ENCODE measurements at regions of chr15 and their contacts with region 1.

Region 1: DNA sequence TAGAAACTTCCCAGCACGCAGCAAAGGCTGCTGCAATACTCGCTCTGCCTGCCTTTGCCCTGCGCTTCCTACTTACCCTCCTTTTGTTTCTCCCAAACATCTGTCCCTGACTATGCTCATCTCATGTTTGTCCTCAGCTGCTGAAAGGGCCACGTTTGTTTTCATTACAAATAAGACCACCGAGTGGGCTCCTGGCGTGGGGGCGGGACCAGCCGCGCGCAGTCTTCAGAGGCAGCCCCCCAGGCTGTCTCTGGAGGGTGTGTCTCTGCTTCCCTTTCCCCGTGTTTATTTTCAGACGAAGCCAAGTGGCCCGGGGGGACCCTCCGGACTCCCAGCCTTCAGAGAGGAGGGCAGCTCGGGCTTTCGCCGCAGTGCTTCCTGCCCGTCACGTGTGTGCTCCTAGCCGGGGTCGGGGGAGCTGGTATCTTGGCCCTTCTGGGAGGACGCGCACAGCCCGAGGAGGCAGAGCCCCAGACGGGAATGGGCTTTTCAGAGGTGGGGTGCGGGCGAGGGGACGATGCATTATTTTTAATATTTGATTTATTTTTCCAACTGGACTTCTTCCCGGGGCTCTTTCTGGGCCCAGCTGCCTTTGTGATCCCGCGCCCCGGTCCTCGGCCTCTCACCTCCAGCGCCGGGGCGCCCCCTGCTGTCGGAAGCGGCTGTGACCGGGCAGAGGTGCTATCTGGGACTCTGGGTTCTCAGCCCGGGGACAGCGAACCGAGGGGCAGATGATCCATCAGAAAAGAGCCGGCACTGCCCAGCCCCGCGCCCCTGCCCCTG is 70.0 kb upstream of the CGNL1 start:
- DNase-seq: peak; percentile 81 to 96
- ATAC-seq: peak; percentile 82

Region 2: DNA sequence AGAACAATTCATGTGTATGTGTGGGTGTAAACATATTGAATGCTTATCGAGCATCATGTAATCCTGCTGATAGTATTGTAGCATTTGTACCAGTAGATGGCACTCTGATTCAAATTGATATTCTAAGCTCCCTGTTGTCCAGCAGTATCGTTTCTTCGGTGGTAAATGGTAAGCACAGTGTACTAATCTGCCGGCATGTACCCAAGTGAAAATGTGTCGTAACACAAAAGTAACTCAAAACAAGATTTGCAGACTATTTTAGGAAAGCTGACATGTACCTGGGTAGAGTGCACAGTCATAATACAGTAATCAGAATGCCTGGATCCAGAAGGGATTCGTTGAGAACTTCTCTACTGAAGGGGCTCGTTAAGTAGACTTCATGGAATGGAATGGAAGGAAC is 809.7 kb before region 1 on chr15:
- intact Hi-C with region 1: loop called in 1 of 2 experiments (anchors 10 kb)
- DNase-seq: no peak
- ATAC-seq: peak; percentile 62

Region 3: GRCh38 chr15:57017024-57017423 is 289.3 kb before region 1 on chr15:
- intact Hi-C with region 1: no loop called
- DNase-seq: no peak
- ATAC-seq: peak; percentile 39

Region 4: GRCh38 chr15:57146506-57147201 is 159.7 kb before region 1 on chr15:
- intact Hi-C with region 1: loop called in 1 of 2 experiments (anchors 10 kb)
- DNase-seq: no peak
- ATAC-seq: peak; percentile 75

Region 5: DNA sequence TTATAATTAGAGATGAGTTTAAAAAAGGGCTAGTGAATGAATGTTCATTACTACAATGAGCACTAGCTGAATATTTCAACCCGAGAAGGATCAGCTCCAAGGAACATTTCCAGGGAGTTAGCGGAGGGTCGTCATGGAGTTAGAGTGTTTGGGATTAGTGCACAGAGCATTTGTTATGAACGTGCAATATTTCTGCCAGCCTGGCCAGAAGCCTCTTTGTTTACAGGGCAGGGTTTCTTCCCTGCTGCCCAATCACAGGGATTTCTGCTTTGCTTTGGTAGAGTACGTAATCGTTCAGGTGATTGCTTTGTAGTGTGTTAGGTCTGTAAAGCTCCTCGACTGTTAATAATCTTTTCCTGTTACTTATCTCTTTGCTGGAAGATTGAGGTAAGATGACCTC is 75.9 kb after region 1 on chr15:
- intact Hi-C with region 1: no loop called
- DNase-seq: no peak
- ATAC-seq: peak; percentile 94

Measured in left colon (tissue), 2 donors.